ENCODE measurements at regions of chr3 and their contacts with region 1.

Region 1: GRCh38 chr3:121995161-121996137 is 26.6 kb downstream of the ILDR1 start:
- DNase-seq: peak; percentile 74
- H3K4me3 ChIP-seq: no peak overlapping the region
- H3K27ac ChIP-seq: peak overlapping the region; percentile 63
- H3K4me1 ChIP-seq: peaks cover 51% of the 10 kb centered on the region
- H3K27me3 ChIP-seq: no peaks in the 10 kb centered on the region
- CTCF ChIP-seq: peak; percentile 32 to 62
- POLR2A ChIP-seq: no peak

Region 2: DNA sequence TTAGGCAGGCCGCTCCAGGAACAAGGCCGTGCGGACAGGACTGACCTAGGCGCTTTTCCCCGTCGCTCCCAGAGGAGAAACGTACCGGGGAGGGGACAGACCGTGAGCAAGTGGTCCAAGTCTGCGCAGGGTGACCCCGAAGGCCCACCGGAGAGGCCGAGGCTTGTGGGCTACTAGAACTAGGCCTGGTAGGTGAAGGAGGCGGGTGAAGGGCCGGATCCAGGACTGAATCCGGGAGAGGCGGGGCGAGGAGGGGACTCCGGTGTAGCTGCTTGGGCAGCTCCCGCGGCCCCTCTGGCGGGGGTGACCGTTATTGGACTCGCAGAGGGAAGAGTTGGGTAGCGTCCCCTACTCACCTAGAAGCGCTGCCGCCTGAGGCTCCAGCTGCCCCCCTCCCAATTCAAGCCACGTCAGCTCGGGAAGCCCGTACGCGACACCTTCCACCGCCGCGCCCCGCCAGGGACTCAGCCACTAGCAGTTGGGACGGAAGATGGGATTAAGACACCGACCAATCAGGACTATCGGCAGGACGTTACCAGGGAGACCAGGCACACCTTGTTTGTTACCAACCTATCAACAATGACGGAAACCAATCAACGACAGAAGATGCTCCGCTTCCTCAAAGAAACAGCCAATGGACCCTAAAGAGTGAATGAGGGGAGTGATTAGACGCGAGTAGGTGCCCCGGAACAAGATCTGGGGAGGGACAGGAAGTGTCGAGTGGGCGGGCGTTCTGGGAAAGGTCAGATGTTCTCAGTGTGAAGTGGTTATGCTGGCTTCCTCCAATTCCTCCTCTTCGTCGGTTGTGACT is 246.0 kb before region 1 on chr3 and contains the start of gene GOLGB1:
- CTCF ChIA-PET with region 1: no interaction called
- POLR2A ChIA-PET with region 1: no interaction called
- dilution Hi-C with region 1: no loop called
- intact Hi-C with region 1: loop called (anchors 5 kb)
- DNase-seq: peak; percentile 99
- H3K4me3 ChIP-seq: peak within 1 kb of the TSS; percentile 49 to 84 (median 64)
- H3K27ac ChIP-seq: peak within 1 kb of the TSS; percentile 74
- H3K4me1 ChIP-seq: peaks cover 20% of the 10 kb centered on the region
- H3K27me3 ChIP-seq: peaks cover 5 to 17% of the 10 kb centered on the region in 2 experiments
- CTCF ChIP-seq: no peak
- POLR2A ChIP-seq: peak; percentile 96
- total RNA-seq, gene GOLGB1: 32.2 and 42.7 TPM in 2 replicates

Region 3: GRCh38 chr3:121834696-121835464 is 160.6 kb before region 1 on chr3 and contains the starts of genes EAF2 and IQCB1:
- CTCF ChIA-PET with region 1: no interaction called
- POLR2A ChIA-PET with region 1: no interaction called
- dilution Hi-C with region 1: no loop called
- intact Hi-C with region 1: loop called (anchors 2 kb)
- DNase-seq: peak; percentile 98
- H3K4me3 ChIP-seq: peak within 1 kb of the TSS; percentile 70 to 93 (median 72)
- H3K27ac ChIP-seq: peak within 1 kb of the TSS; percentile 67
- H3K4me1 ChIP-seq: peaks cover 8% of the 10 kb centered on the region
- H3K27me3 ChIP-seq: peaks cover 0 to 3% of the 10 kb centered on the region in 2 experiments
- CTCF ChIP-seq: no peak
- POLR2A ChIP-seq: no peak
- total RNA-seq, gene EAF2: 1.5 and 1.6 TPM in 2 replicates
- total RNA-seq, gene IQCB1: 21.6 and 22.0 TPM in 2 replicates

Region 4: GRCh38 chr3:122012821-122013220 is 17.4 kb after region 1 on chr3:
- CTCF ChIA-PET with region 1: interaction called, 11 read pairs
- POLR2A ChIA-PET with region 1: no interaction called
- dilution Hi-C with region 1: no loop called
- intact Hi-C with region 1: no loop called
- DNase-seq: no peak
- H3K4me3 ChIP-seq: no peak overlapping the region
- H3K27ac ChIP-seq: no peak overlapping the region
- H3K4me1 ChIP-seq: no peaks in the 10 kb centered on the region
- H3K27me3 ChIP-seq: peaks cover 5 to 30% of the 10 kb centered on the region in 2 experiments
- CTCF ChIP-seq: no peak
- POLR2A ChIP-seq: no peak

Region 5: DNA sequence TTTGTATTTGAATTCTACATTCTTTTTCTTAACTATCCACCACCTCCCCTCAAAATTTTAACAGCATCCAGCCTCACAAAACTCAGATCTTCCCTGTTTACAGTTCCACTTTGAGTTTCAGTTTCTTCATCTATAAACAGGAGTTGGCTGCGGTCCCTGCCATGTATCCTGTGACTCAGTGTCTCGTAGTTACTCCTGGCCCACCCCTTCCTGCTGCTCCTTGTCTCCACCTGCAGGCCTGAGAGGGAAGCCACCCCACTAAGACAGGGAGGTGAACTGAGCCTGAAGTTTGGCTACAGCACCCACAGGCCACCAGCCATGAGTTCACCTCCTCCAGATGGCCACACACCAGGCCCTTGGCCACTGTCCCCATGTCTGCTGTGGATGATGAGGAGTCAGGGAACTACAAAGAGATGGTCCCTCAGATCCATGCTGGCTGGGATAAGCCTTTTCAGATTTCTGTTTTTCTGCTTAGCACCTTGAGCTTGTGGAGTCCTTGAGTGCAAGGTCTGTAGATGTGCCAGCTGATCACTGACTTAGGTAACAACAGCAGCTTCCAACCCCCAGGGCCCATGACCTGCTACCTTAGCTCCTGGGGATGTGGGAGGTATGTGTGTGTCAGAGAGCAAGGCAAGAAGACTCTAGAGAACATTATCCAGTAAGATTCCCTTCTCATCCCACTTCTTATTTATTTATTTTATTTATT is 97.2 kb after region 1 on chr3:
- CTCF ChIA-PET with region 1: no interaction called
- POLR2A ChIA-PET with region 1: no interaction called
- dilution Hi-C with region 1: no loop called
- intact Hi-C with region 1: loop called (anchors 5 kb)
- DNase-seq: peak; percentile 34
- H3K4me3 ChIP-seq: no peak overlapping the region
- H3K27ac ChIP-seq: no peak overlapping the region
- H3K4me1 ChIP-seq: peaks cover 6% of the 10 kb centered on the region
- H3K27me3 ChIP-seq: peaks cover 4% of the 10 kb centered on the region in 2 experiments
- CTCF ChIP-seq: peak; percentile 58 to 68
- POLR2A ChIP-seq: no peak

Region 6: DNA sequence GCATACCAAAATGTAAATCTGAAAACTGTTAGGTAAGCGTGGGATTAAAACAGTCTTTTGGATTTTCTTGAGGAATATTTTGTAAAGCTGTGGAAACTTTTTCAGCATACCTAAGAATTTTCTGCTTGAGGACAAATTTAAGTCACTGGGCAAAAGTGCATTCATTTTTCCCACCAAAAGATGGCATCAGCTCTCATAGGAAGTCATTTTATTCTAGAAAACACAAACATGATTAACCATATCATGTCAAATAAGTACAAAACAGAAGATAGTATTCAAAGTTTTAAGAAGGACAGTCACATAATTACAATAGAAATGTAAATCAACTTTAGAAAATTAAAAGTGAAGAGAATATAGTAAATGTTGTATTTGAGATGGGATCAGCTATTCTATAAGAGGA is 862.9 kb after region 1 on chr3:
- CTCF ChIA-PET with region 1: no interaction called
- POLR2A ChIA-PET with region 1: no interaction called
- dilution Hi-C with region 1: no loop called
- intact Hi-C with region 1: no loop called
- DNase-seq: peak; percentile 45
- H3K4me3 ChIP-seq: no peak overlapping the region
- H3K27ac ChIP-seq: no peak overlapping the region
- H3K4me1 ChIP-seq: no peaks in the 10 kb centered on the region
- H3K27me3 ChIP-seq: no peaks in the 10 kb centered on the region
- CTCF ChIP-seq: peak in 1 of 2 donors; percentile 15
- POLR2A ChIP-seq: no peak